ENCODE measurements at regions of chr6 and their contacts with region 1.

Region 1: GRCh38 chr6:89940225-89941027 is 46.2 kb downstream of the GJA10 start:
- DNase-seq: peak; percentile 80
- ATAC-seq: peak; percentile 80
- H3K4me3 Mint-ChIP-seq: no peak overlapping the region
- H3K27ac Mint-ChIP-seq: peak overlapping the region; percentile 47
- H3K4me1 Mint-ChIP-seq: peaks cover 60% of the 10 kb centered on the region
- H3K27me3 Mint-ChIP-seq: no peaks in the 10 kb centered on the region

Region 2: GRCh38 chr6:89952686-89953085 is 12.3 kb after region 1 on chr6:
- CTCF ChIA-PET with region 1: interaction called, 24 read pairs
- POLR2A ChIA-PET with region 1: interaction called, 5 read pairs
- intact Hi-C with region 1: no loop called
- DNase-seq: peak; percentile 66
- ATAC-seq: peak; percentile 60
- H3K4me3 Mint-ChIP-seq: no peak overlapping the region
- H3K27ac Mint-ChIP-seq: peak overlapping the region; percentile 79
- H3K4me1 Mint-ChIP-seq: peaks cover 75% of the 10 kb centered on the region
- H3K27me3 Mint-ChIP-seq: no peaks in the 10 kb centered on the region

Region 3: DNA sequence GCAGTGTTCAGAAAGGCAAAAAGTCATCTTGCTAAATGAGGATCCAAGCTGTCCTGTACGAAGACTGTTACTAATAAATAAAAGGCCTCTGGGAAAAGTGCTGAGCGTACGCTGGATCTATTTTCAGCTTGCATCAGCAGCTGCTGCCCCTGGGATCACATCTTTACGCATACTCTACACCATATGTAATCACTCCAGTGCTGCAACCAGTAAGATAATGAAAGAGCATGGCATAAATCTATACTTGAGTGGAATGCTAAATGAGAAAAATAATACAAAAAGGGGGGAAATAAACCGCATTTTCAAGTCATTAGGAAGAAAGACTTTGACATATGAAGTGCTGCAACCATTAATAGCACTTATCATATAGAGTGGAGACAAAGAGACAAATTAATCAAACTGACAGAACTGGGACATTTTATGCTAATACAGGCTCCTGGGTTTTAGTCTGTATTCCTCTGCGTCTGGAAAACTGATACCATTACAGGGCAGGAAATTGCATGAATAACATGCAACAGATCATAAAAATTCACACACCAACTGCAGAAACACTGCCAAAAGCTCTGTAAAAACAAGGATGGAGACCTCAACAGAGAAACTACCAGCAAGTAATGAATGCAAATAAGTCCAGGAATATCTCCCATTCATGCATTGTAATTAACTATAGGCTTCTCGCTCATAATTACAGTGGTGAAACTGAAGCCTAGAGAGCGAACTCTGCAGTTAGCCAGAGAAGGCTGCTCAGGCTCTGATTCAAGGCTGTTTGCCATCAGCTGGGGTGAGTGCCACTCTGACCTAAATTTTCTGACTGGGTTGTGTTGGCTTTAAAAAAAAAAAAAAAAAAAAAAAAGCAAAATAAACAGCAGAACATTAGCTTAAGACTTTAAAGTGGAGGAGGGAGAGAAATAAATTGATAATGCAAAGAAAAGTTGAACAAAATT is 37.7 kb after region 1 on chr6:
- CTCF ChIA-PET with region 1: interaction called, 11 read pairs
- POLR2A ChIA-PET with region 1: no interaction called
- intact Hi-C with region 1: no loop called
- DNase-seq: no peak
- ATAC-seq: no peak
- H3K4me3 Mint-ChIP-seq: no peak overlapping the region
- H3K27ac Mint-ChIP-seq: no peak overlapping the region
- H3K4me1 Mint-ChIP-seq: peaks cover 47% of the 10 kb centered on the region
- H3K27me3 Mint-ChIP-seq: no peaks in the 10 kb centered on the region

Region 4: DNA sequence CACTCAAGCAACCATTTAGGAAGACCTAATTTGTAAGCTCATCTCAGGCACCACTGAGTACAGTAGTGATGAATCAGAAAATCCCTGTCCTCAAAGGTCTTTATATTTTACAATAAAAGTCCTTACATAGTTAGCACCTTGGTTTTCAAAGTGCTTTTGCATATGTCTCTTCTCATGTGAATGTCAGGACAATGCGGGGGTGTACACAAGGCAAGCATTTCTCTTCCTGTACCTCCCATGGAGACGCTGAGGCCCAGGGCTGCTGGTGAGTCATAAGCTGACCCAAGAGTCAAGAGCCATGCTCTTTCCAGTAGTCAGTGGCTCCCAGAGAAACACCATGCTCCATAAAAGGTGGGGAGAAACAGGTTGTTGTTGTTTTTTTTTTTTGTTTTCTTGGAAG is 127.8 kb after region 1 on chr6:
- CTCF ChIA-PET with region 1: interaction called, 11 read pairs
- POLR2A ChIA-PET with region 1: no interaction called
- intact Hi-C with region 1: no loop called
- DNase-seq: peak; percentile 71
- ATAC-seq: peak; percentile 73
- H3K4me3 Mint-ChIP-seq: no peak overlapping the region
- H3K27ac Mint-ChIP-seq: peak overlapping the region; percentile 64
- H3K4me1 Mint-ChIP-seq: peaks cover 87% of the 10 kb centered on the region
- H3K27me3 Mint-ChIP-seq: no peaks in the 10 kb centered on the region

Region 5: DNA sequence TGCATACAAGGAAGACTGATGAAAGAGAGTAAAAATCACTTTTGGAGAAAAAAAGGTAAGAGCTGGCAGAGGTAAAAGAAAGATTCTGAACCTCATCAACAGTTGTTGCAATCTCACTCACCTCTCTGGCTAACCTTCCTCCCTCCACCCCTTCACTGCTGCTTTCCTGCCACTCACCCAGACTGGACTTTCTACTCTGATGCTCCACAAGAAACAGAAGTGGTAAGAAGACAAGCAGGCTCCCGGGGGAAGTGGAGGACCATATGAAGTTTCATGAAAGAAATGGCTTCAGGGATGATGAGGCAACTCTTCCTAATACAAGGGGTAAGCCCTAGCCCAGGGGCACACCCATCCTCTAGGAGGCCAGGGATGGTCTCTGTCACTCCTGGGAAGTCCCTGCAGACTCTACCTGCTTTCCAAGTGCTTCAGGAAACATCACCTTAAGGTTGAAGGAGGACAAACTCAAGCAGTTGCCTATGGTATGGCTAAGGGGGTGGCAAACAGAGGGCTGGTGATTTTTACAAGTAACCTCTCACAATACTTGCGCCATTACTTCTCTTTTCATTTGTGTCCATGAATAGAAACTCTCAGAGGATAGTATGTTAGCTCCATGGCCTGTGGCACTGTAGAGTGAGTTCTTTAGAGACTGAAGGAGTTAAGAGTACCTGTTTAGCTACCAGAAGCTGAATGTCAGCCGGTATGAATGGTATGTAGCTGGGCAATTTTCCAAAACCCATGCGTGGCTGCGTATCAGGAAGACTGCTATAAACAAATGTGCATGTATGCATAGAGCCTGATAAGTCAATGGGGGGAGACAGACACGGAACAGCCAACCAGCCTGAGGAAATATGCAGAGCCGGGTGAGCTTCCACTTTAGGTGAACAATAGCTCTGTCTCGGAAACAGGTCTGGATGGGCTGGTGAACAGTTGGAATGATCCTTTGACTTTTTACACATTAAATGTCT is 244.2 kb after region 1 on chr6:
- CTCF ChIA-PET with region 1: interaction called, 11 read pairs
- POLR2A ChIA-PET with region 1: no interaction called
- intact Hi-C with region 1: loop called (anchors 5 kb)
- DNase-seq: peak; percentile 18
- ATAC-seq: no peak
- H3K4me3 Mint-ChIP-seq: peak overlapping the region; percentile 11
- H3K27ac Mint-ChIP-seq: peak overlapping the region; percentile 74
- H3K4me1 Mint-ChIP-seq: peaks cover 71% of the 10 kb centered on the region
- H3K27me3 Mint-ChIP-seq: no peaks in the 10 kb centered on the region